Ascending aorta (tissue), 2 donors: ENCODE measurements at regions of chr5 and their contacts with region 1.

Region 1: GRCh38 chr5:169302491-169303118 is 1.7 kb upstream of the SLIT3 start:
- DNase-seq: peak; percentile 41 to 86
- H3K4me3 ChIP-seq: peak overlapping the region in 1 of 2 donors; percentile 88
- H3K27ac ChIP-seq: peak overlapping the region in 1 of 2 donors; percentile 80
- H3K4me1 ChIP-seq: peaks cover 0 to 19% of the 10 kb centered on the region in 2 donors
- H3K27me3 ChIP-seq: no peaks in the 10 kb centered on the region
- CTCF ChIP-seq: peak; percentile 77 to 95 (median 89)

Region 2: GRCh38 chr5:168486136-168486879 is 816.3 kb before region 1 on chr5 and contains the start of gene RARS1:
- intact Hi-C with region 1: loop called (anchors 10 kb)
- DNase-seq: peak; percentile 57 to 95
- H3K4me3 ChIP-seq: peak within 1 kb of the TSS; percentile 89 to 91
- H3K27ac ChIP-seq: peak within 1 kb of the TSS; percentile 78 to 81
- H3K4me1 ChIP-seq: peaks cover 3 to 9% of the 10 kb centered on the region in 2 donors
- H3K27me3 ChIP-seq: no peaks in the 10 kb centered on the region
- CTCF ChIP-seq: peak; percentile 91 to 98 (median 97)
- total RNA-seq, gene RARS1: 24.5 TPM

Region 3: GRCh38 chr5:168679515-168679920 is 623.1 kb before region 1 on chr5:
- intact Hi-C with region 1: loop called (anchors 1 kb)
- DNase-seq: peak in 1 of 2 donors; percentile 83
- H3K4me3 ChIP-seq: no peak overlapping the region
- H3K27ac ChIP-seq: no peak overlapping the region
- H3K4me1 ChIP-seq: peaks cover 0 to 3% of the 10 kb centered on the region in 2 donors
- H3K27me3 ChIP-seq: no peaks in the 10 kb centered on the region
- CTCF ChIP-seq: peak; percentile 68 to 94 (median 83)

Region 4: DNA sequence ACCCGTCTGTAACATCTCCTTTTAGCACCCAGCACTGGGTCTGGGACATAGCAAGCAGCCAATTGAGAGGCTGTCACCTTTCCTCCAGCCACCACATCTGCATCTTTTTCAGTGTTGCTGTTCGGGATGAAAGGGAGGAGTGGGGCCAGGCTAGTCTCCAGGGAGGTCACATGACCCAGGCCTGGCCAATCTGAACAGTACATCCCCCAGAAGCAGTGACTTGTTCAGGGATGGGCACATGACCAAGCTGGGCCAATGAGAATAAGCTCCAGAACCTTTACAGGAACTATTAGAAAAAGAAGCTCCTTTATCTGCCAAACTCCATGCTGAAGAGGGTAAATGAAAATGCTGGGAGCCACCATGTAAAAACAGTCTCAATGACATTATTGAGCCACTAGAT is 360.7 kb before region 1 on chr5:
- intact Hi-C with region 1: no loop called
- DNase-seq: no peak
- H3K4me3 ChIP-seq: no peak overlapping the region
- H3K27ac ChIP-seq: no peak overlapping the region
- H3K4me1 ChIP-seq: no peaks in the 10 kb centered on the region
- H3K27me3 ChIP-seq: no peaks in the 10 kb centered on the region
- CTCF ChIP-seq: no peak

Region 5: GRCh38 chr5:169116961-169117461 is 185.6 kb before region 1 on chr5:
- intact Hi-C with region 1: loop called (anchors 5 kb)
- DNase-seq: peak; percentile 42 to 72
- H3K4me3 ChIP-seq: no peak overlapping the region
- H3K27ac ChIP-seq: peak overlapping the region; percentile 84 to 88
- H3K4me1 ChIP-seq: peaks cover 5% of the 10 kb centered on the region in 2 donors
- H3K27me3 ChIP-seq: no peaks in the 10 kb centered on the region
- CTCF ChIP-seq: peak in 2 of 3 experiments; percentile 22 to 30

Region 6: GRCh38 chr5:169131616-169132301 is 170.8 kb before region 1 on chr5:
- intact Hi-C with region 1: no loop called
- DNase-seq: no peak
- H3K4me3 ChIP-seq: no peak overlapping the region
- H3K27ac ChIP-seq: peak overlapping the region; percentile 49 to 65
- H3K4me1 ChIP-seq: peaks cover 0 to 8% of the 10 kb centered on the region in 2 donors
- H3K27me3 ChIP-seq: no peaks in the 10 kb centered on the region
- CTCF ChIP-seq: no peak

Region 7: DNA sequence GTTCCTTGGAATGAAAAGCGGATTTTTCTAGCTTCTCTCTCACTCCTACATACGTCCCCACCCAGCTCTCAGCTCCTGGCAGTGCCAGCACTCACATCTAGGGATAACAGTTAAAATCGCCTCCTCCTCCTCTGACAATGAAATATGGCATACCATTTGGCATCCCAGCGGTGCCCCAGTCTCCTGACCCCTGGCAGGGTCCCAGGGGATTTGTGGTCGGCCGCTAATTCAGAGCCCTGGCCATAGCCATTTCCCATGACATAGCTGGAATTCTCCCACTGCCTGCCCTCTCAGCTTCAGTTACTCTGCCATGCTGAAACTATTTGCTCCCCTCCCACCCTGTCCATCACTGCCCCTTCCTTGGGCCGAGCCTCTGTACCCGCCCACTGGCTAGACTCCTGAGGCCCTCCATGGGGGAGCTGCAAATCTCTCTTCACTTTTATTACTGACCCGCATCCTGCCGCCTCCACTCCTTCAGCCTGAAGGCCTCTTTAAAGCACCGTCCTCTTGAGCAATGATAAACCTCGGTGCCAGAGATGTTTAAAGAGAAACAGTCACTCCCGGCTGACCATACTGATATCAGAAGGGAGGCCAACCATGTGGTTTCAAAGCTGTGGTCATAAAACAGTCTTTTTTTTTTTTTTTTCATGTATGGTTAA is 141.5 kb before region 1 on chr5:
- intact Hi-C with region 1: loop called (anchors 1 kb)
- DNase-seq: peak in 1 of 2 donors; percentile 82
- H3K4me3 ChIP-seq: peak overlapping the region; percentile 19 to 24
- H3K27ac ChIP-seq: peak overlapping the region; percentile 88 to 89
- H3K4me1 ChIP-seq: peaks cover 2 to 21% of the 10 kb centered on the region in 2 donors
- H3K27me3 ChIP-seq: no peaks in the 10 kb centered on the region
- CTCF ChIP-seq: no peak

Region 8: GRCh38 chr5:169286572-169287300 is 15.9 kb before region 1 on chr5:
- intact Hi-C with region 1: loop called (anchors 1 kb)
- DNase-seq: no peak
- H3K4me3 ChIP-seq: no peak overlapping the region
- H3K27ac ChIP-seq: peak overlapping the region; percentile 67 to 72
- H3K4me1 ChIP-seq: peaks cover 0 to 33% of the 10 kb centered on the region in 2 donors
- H3K27me3 ChIP-seq: no peaks in the 10 kb centered on the region
- CTCF ChIP-seq: no peak

Region 9: GRCh38 chr5:169721771-169722170 is 419.2 kb after region 1 on chr5:
- intact Hi-C with region 1: no loop called
- DNase-seq: no peak
- H3K4me3 ChIP-seq: no peak overlapping the region
- H3K27ac ChIP-seq: no peak overlapping the region
- H3K4me1 ChIP-seq: no peaks in the 10 kb centered on the region
- H3K27me3 ChIP-seq: no peaks in the 10 kb centered on the region
- CTCF ChIP-seq: no peak